Activated CD8-positive, alpha-beta T cell treated with anti-CD3 and anti-CD28 coated beads, Interleukin-2, amount 10 ng/mL, durations not matched to agents 7 days and 5 days (primary cell): ENCODE measurements at regions of chr6 and their contacts with region 1.

Region 1: DNA sequence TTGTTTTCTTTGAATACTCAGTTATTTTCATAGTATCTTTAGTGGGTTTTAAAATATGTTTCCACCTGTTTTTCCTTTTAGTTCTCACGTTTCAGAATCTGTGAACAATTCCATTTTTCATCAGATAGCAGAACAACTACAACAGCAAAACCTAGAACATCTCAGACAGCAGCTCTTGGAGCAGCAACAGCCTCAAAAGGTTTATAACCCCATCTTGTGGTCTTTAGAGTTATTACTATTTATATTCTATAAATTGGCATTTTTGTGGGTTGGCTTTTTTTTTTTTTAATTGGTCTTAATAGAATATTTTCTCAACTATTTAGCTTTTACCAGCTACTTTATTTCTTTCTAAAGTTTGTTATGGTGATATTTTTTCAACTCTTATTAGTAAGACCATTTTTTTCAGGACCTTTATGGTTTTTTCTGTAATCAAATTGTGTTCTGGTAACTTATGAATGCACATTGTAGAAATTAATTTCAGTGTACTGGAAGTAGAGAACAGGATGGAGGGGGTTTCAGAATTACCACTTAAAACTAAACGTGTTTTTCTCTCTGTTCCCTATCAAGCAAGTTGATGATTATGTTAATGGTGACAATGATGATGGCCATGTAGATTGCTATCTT is 72.2 kb downstream of the SCAF8 start:
- DNase-seq: no peak
- ATAC-seq: no peak
- H3K4me3 Mint-ChIP-seq: no peak overlapping the region
- H3K27ac Mint-ChIP-seq: no peak overlapping the region
- H3K4me1 Mint-ChIP-seq: no peaks in the 10 kb centered on the region
- H3K27me3 Mint-ChIP-seq: no peaks in the 10 kb centered on the region

Region 2: DNA sequence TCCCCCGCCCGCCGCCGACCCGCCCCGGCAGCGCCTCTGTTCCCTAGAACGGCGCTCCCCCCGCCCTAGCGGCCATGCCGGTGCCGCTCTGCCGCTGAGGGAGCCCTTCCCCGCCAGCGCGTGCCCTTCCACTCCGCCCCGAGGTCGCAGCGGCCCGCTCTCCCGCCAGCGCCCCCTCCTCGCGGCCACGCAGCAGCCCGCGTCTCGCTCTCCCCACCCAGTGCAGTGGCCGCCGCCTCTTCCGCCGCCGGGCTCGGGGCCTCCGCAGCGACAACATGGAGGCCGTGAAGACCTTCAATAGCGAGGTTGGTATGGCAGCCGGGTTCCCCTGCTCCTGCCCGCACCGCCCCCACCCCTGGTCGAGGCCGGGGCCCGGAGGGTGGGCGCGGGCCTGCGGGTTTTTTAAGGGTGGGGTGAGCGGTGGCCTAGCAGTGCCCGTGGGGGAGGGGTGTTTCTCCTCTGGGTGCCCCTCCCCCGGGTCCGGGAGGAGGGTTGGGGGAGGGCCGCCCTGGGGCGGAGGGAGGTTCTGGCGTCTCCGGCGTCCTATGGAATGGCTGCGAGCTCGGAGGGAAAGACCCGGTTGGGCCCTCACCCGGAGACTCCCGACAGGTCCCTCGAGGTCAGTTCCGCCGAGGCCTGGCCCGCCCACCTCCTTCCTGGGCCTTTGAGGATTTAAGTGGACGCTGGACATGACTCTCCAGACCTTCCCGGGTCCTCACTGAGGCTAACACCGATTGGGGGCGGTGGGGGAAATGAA is 71.6 kb before region 1 on chr6:
- CTCF ChIA-PET with region 1: interaction called, 10 read pairs
- POLR2A ChIA-PET with region 1: no interaction called
- DNase-seq: peak; percentile 90
- ATAC-seq: peak; percentile 85
- H3K4me3 Mint-ChIP-seq: peak overlapping the region; percentile 86
- H3K27ac Mint-ChIP-seq: peak overlapping the region; percentile 97
- H3K4me1 Mint-ChIP-seq: peaks cover 46% of the 10 kb centered on the region
- H3K27me3 Mint-ChIP-seq: no peaks in the 10 kb centered on the region